T-cell (primary cell): ENCODE measurements at regions of chr17 and their contacts with region 1.

Region 1: GRCh38 chr17:28777178-28777577 is 33.4 kb downstream of the TRAF4 start:
- DNase-seq: no peak
- ATAC-seq: no peak
- H3K4me3 ChIP-seq: no peak overlapping the region
- H3K4me3 Mint-ChIP-seq: no peak overlapping the region
- H3K27ac ChIP-seq: no peak overlapping the region
- H3K27ac Mint-ChIP-seq: peak overlapping the region; percentile 73 to 91
- H3K4me1 ChIP-seq: peaks cover 3 to 11% of the 10 kb centered on the region in 2 experiments
- H3K4me1 Mint-ChIP-seq: peaks cover 37 to 41% (median 38%) of the 10 kb centered on the region in 3 donors
- H3K27me3 ChIP-seq: no peaks in the 10 kb centered on the region
- H3K27me3 Mint-ChIP-seq: no peaks in the 10 kb centered on the region

Region 2: DNA sequence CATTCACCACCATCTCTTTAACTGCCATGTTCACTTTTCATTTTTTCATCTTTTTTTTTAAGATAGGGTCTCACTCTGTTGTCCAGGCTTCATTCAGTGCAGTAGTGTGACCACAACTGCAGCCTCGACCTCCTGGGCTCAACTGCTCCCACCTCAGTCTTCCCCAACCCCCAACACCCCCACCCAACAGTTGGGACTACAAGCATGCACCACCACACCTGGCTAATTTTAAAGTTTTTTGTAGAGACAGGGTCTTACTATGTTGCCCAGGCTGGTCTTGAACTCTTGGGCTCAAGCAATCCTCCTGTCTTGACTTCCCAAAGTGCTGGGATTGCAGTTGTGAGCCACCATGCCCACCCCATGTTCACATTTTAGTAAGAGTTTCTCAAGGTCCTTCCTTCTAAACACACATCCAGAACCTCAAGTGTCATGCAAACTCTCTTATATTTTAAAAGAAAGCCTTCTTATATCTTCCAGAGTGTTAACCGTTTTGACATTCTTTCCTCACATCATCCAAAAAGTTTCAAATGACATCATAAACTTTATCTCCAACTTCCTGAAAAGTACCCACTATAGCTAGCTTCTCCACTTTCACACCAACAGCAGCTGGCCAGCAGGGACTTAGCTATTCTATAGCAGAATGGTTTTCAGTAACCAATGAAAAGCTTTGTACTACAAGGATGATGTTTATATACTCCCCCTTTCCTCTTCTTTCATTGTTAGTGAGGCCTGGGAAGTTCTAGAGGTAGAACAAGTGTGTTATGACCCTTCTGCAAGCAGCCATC is 15.9 kb after region 1 on chr17:
- CTCF ChIA-PET with region 1: interaction called, 7 to 11 read pairs
- POLR2A ChIA-PET with region 1: no interaction called
- DNase-seq: no peak
- ATAC-seq: no peak
- H3K4me3 ChIP-seq: no peak overlapping the region
- H3K4me3 Mint-ChIP-seq: no peak overlapping the region
- H3K27ac ChIP-seq: no peak overlapping the region
- H3K27ac Mint-ChIP-seq: peak overlapping the region; percentile 44 to 46
- H3K4me1 ChIP-seq: no peaks in the 10 kb centered on the region
- H3K4me1 Mint-ChIP-seq: peaks cover 29 to 31% (median 30%) of the 10 kb centered on the region in 3 donors
- H3K27me3 ChIP-seq: no peaks in the 10 kb centered on the region
- H3K27me3 Mint-ChIP-seq: no peaks in the 10 kb centered on the region